ENCODE measurements at regions of chr12 and their contacts with region 1.

Region 1: GRCh38 chr12:3872800-3873636 is at the start of gene PARP11:
- DNase-seq: peak; percentile 97
- H3K4me3 Mint-ChIP-seq: peak within 1 kb of the TSS; percentile 98
- H3K27ac Mint-ChIP-seq: peak within 1 kb of the TSS; percentile 97
- H3K4me1 Mint-ChIP-seq: peaks cover 43% of the 10 kb centered on the region
- H3K27me3 Mint-ChIP-seq: no peaks in the 10 kb centered on the region
- total RNA-seq, gene PARP11: 15.3 and 16.0 TPM in 2 replicates

Region 2: GRCh38 chr12:3752741-3753486 is 120.1 kb before region 1 on chr12 and contains the start of gene CRACR2A:
- intact Hi-C with region 1: loop called (anchors 5 kb)
- DNase-seq: peak; percentile 82
- H3K4me3 Mint-ChIP-seq: peak within 1 kb of the TSS; percentile 98
- H3K27ac Mint-ChIP-seq: peak within 1 kb of the TSS; percentile 98
- H3K4me1 Mint-ChIP-seq: peaks cover 43% of the 10 kb centered on the region
- H3K27me3 Mint-ChIP-seq: no peaks in the 10 kb centered on the region
- total RNA-seq, gene CRACR2A: 24.6 and 25.2 TPM in 2 replicates

Region 3: DNA sequence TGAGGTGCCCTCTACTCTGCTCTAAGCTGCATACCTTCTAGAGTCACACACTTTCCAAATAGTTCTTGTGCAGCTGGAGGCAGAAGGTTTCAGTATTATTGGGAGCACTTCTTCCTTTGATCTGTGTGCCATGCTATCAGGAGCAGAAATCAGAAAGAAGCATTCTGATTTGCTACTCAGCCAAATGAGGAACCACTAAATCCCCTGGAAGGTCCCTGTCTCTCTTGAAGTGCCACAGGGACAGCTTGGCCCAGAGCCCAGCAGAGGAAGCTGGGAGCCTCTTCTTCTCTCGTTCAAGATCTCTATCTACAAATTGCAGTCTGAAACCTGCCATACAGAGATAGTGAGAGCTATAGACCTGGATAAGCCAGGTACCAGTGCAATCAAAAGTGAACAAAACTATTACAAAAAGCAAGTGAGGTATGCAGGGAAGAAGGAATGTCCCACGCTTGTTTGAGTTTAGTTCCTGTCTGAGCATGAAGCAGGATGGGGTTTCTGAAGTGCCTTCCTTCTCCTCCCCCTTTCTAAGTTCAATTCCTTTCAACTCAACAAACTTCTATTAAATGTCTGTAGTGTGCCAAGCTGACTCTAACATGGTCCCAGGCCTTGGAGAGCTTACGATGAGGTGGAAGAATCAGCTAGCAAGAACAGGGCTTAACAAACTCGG is 101.1 kb after region 1 on chr12:
- intact Hi-C with region 1: loop called (anchors 1 kb)
- DNase-seq: no peak
- H3K4me3 Mint-ChIP-seq: peak overlapping the region; percentile 30
- H3K27ac Mint-ChIP-seq: peak overlapping the region; percentile 84
- H3K4me1 Mint-ChIP-seq: peaks cover 63% of the 10 kb centered on the region
- H3K27me3 Mint-ChIP-seq: peaks cover 2% of the 10 kb centered on the region

Region 4: DNA sequence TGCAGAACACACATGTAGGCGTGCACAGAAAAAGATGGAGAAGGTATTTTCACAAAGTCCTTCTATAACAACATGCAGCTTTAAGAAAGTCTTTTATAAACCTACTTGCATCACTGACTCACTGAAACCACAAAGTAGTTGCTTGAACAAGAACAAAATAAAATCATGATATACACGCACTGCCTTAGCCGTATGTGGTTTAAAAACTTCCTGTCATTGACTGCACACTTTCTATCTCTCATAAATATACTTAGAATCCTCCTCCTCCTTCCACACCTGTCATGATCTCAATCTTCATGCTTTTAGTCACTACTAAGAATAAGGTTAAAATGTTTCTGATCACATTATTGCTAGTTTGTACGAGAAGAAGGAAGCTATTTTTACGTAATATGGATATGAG is 633.9 kb after region 1 on chr12:
- intact Hi-C with region 1: loop called (anchors 5 kb)
- DNase-seq: peak; percentile 26
- H3K4me3 Mint-ChIP-seq: peak overlapping the region; percentile 31
- H3K27ac Mint-ChIP-seq: peak overlapping the region; percentile 35
- H3K4me1 Mint-ChIP-seq: peaks cover 26% of the 10 kb centered on the region
- H3K27me3 Mint-ChIP-seq: no peaks in the 10 kb centered on the region

Region 5: GRCh38 chr12:4829161-4829792 is 956.3 kb after region 1 on chr12:
- intact Hi-C with region 1: loop called (anchors 10 kb)
- DNase-seq: peak; percentile 17
- H3K4me3 Mint-ChIP-seq: peak overlapping the region; percentile 92
- H3K27ac Mint-ChIP-seq: peak overlapping the region; percentile 99
- H3K4me1 Mint-ChIP-seq: peaks cover 77% of the 10 kb centered on the region
- H3K27me3 Mint-ChIP-seq: no peaks in the 10 kb centered on the region

Measured in activated T-helper 2 cell treated with anti-CD3 and anti-CD28 coated beads, Interferon-gamma antibody, Interleukin-2, Interleukin-4, amounts not matched to agents 10 μg/mL and 5 μg/mL and 100 μg/mL, durations not matched to agents 14 hours and 24 hours and 36 hours (primary cell).